Caco-2 (cell line): ENCODE measurements at regions of chr9 and their contacts with region 1.

Region 1: DNA sequence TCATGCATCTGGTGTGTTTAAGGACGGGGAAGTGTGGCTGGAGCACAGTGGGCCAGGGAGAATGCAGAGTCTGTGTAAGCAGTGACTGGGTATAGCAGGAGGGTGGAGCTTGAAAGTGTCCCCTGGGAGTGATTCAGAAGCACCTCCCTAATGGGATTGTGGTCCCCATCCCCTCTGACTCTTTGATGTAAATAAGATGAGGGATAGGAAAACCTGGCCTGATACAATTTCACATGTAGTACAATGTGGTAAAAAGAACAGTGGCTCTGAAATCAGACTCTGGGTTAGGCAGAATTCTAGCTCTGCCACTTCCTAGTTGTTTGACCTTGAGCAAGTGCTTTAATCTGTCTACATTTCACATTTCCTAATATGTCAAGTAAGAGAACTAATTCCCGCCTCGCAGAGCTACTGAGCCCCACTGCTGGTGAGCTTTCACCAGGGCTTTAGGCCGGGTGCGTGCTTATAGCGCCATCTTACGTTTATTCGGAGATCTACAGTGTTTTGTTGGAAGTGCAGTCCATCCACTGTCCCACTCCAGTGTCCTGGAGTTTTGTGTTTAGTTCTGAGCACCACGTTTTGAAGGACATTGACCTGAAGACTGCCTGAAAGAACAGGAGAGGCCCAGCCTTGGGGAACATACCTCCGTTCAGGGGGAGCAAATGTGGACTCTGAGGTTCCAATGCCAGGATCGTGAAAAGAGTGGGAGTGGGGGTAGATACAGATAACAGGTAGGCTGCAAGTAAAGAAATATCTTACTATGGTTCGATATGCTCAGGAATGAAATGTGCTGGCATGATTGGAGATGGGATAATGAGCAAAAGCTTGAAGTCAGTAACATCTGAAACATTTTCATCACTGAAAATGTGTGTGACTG is 51.2 kb upstream of the TESK1 start:
- DNase-seq: peak; percentile 73 to 77
- H3K4me3 ChIP-seq: no peak overlapping the region
- H3K4me3 Mint-ChIP-seq: no peak overlapping the region
- H3K27ac Mint-ChIP-seq: no peak overlapping the region
- H3K4me1 ChIP-seq: no peaks in the 10 kb centered on the region
- H3K4me1 Mint-ChIP-seq: no peaks in the 10 kb centered on the region
- H3K27me3 ChIP-seq: no peaks in the 10 kb centered on the region
- H3K27me3 Mint-ChIP-seq: no peaks in the 10 kb centered on the region
- CTCF ChIP-seq: peak; percentile 76 to 77

Region 2: GRCh38 chr9:35014517-35014916 is 539.4 kb before region 1 on chr9:
- CTCF ChIA-PET with region 1: no interaction called
- POLR2A ChIA-PET with region 1: no interaction called
- intact Hi-C with region 1: no loop called
- DNase-seq: no peak
- H3K4me3 ChIP-seq: no peak overlapping the region
- H3K4me3 Mint-ChIP-seq: no peak overlapping the region
- H3K27ac Mint-ChIP-seq: no peak overlapping the region
- H3K4me1 ChIP-seq: no peaks in the 10 kb centered on the region
- H3K4me1 Mint-ChIP-seq: no peaks in the 10 kb centered on the region
- H3K27me3 ChIP-seq: no peaks in the 10 kb centered on the region
- H3K27me3 Mint-ChIP-seq: no peaks in the 10 kb centered on the region
- CTCF ChIP-seq: no peak

Region 3: DNA sequence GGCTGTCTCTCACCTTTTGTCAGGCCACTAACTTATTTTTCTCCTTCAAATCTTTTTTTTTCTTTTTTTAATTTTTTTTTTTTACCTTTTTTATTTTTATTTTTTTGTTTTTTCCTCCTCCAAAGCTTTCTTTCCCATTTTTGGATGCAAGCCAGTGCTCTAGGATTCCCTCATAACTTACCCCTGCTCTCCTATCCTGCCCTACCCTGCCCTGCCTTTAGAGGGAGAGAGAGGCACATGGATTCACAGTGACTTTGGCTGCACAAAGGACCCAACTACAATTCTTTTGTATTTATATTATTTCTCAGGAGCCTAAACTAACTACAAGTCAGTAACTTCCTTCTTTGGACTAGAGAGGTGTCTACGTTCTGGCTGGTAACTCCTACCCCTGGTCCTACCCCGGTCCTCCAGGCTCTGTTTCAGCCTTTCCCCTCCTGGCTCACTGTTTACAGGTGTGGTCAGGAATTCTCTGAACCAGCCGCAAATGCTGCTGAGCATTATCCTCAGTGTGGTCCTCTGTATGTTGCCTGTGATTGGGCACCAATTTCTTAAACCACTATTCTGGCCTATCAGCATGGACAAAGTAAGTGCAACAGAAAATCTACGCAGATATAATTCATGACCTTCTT is 72.4 kb before region 1 on chr9:
- CTCF ChIA-PET with region 1: interaction called, 5 read pairs
- POLR2A ChIA-PET with region 1: no interaction called
- intact Hi-C with region 1: loop called (anchors 1 kb)
- DNase-seq: peak; percentile 55 to 62
- H3K4me3 ChIP-seq: no peak overlapping the region
- H3K4me3 Mint-ChIP-seq: no peak overlapping the region
- H3K27ac Mint-ChIP-seq: no peak overlapping the region
- H3K4me1 ChIP-seq: peaks cover 4% of the 10 kb centered on the region; the same call in 1 of the 2 replicates
- H3K4me1 Mint-ChIP-seq: peaks cover 4% of the 10 kb centered on the region
- H3K27me3 ChIP-seq: no peaks in the 10 kb centered on the region
- H3K27me3 Mint-ChIP-seq: no peaks in the 10 kb centered on the region
- CTCF ChIP-seq: peak; percentile 41 to 86

Region 4: DNA sequence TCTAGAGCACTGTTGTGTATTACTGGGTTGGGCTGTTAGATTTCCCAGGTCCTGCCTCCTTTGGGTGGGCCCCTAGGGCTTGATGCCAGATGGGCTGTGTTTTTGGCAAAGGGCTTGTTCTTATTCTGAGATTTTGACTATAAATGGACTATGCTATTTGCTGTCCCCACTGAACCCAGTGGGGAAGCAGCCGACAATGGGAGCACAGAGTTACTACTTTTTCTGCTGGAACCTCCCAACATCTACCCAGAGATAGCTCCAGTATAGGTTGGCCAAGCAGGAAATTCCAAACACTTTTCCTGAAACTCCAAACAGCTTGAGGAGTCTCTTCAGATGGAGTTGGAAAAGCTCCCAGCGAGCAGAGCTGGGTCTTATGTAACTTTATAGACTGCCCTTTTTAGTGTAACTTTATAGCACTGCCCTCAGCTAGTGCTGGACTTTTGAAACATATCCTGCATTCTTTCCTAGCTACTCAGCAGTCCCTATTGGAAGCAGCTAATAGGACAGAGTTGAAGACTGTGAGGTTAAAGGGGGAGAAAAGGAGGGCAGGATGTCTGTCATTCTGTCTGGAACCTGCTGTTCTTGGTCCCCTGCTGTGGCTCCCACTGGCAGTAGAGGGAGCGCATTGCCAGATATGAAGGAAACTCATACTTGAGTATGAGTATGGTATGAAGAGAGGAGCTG is 43.0 kb before region 1 on chr9:
- CTCF ChIA-PET with region 1: interaction called, 43 read pairs
- POLR2A ChIA-PET with region 1: no interaction called
- intact Hi-C with region 1: loop called (anchors 1 kb)
- DNase-seq: peak; percentile 79 to 83
- H3K4me3 ChIP-seq: no peak overlapping the region
- H3K4me3 Mint-ChIP-seq: peak overlapping the region; percentile 36
- H3K27ac Mint-ChIP-seq: peak overlapping the region; percentile 88
- H3K4me1 ChIP-seq: peaks cover 37% of the 10 kb centered on the region
- H3K4me1 Mint-ChIP-seq: peaks cover 28% of the 10 kb centered on the region
- H3K27me3 ChIP-seq: no peaks in the 10 kb centered on the region
- H3K27me3 Mint-ChIP-seq: no peaks in the 10 kb centered on the region
- CTCF ChIP-seq: peak in 1 of 2 experiments; percentile 57

Region 5: DNA sequence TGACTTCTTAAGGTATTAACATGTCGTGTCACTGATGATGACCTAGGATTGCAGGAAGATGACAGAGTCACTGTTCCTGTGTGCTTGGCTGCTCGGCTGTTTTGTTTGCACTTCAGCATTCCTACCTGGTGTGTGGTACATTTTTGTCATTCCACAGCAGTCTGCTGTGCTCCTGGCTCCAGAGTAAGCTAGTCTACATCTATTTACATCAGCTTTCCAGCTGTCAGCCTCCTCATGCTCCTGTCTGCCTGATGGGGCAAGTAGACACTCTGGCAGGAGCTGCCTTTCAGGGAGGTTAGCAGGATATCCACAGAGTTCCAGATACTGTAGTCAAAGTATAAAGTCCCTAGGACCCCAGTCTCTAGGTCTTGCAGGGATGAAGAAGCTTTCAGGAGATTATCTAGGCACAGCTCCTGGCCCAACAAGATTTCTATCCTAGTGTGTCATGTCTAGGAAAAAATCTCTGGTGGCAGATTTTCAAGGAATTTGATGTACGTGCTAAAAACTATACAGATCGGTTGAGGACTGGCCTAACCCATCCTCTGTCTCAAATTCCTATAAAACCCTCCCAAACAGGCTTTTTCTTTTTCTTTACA is 35.6 kb before region 1 on chr9:
- CTCF ChIA-PET with region 1: interaction called, 28 read pairs
- POLR2A ChIA-PET with region 1: interaction called, 3 read pairs
- intact Hi-C with region 1: no loop called
- DNase-seq: peak; percentile 88 to 93
- H3K4me3 ChIP-seq: no peak overlapping the region
- H3K4me3 Mint-ChIP-seq: peak overlapping the region; percentile 22
- H3K27ac Mint-ChIP-seq: peak overlapping the region; percentile 81
- H3K4me1 ChIP-seq: peaks cover 67% of the 10 kb centered on the region
- H3K4me1 Mint-ChIP-seq: peaks cover 59% of the 10 kb centered on the region
- H3K27me3 ChIP-seq: no peaks in the 10 kb centered on the region
- H3K27me3 Mint-ChIP-seq: no peaks in the 10 kb centered on the region
- CTCF ChIP-seq: no peak

Region 6: DNA sequence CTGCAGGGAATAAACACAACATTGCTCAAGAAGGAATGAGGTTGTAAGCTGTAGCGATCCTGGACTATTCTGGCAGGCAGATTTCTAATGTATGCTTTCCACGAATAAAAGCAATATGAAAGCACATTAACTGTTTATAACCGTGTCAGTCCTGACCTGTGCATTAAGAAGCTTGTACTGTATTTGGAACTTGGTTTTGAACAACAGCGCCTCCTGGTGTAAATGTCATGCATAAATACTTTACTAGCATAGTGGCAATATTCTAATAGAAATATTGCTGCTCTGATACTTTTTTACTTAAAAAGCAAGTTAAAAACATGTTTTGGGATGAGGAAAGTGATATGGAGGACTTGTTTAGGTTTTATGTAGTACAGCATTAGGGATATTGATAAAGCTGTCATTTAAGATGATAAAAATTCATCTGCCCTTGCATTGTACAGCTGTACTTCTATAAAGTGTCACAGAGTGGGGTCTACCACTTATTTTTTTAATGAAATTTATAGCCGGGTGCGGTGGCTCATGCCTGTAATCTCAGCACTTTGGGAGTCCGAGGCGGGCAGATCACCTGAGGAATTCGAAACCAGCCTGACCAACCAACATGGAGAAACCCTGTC is 775.0 kb after region 1 on chr9:
- CTCF ChIA-PET with region 1: no interaction called
- POLR2A ChIA-PET with region 1: no interaction called
- intact Hi-C with region 1: no loop called
- DNase-seq: peak; percentile 53 to 67
- H3K4me3 ChIP-seq: no peak overlapping the region
- H3K4me3 Mint-ChIP-seq: no peak overlapping the region
- H3K27ac Mint-ChIP-seq: no peak overlapping the region
- H3K4me1 ChIP-seq: peaks cover 11% of the 10 kb centered on the region
- H3K4me1 Mint-ChIP-seq: peaks cover 25% of the 10 kb centered on the region
- H3K27me3 ChIP-seq: no peaks in the 10 kb centered on the region
- H3K27me3 Mint-ChIP-seq: no peaks in the 10 kb centered on the region
- CTCF ChIP-seq: peak; percentile 70 to 87